Activated B cell treated with CpG ODN at 0.5 μM for 24 hours (primary cell): ENCODE measurements at regions of chr1 and their contacts with region 1.

Region 1: DNA sequence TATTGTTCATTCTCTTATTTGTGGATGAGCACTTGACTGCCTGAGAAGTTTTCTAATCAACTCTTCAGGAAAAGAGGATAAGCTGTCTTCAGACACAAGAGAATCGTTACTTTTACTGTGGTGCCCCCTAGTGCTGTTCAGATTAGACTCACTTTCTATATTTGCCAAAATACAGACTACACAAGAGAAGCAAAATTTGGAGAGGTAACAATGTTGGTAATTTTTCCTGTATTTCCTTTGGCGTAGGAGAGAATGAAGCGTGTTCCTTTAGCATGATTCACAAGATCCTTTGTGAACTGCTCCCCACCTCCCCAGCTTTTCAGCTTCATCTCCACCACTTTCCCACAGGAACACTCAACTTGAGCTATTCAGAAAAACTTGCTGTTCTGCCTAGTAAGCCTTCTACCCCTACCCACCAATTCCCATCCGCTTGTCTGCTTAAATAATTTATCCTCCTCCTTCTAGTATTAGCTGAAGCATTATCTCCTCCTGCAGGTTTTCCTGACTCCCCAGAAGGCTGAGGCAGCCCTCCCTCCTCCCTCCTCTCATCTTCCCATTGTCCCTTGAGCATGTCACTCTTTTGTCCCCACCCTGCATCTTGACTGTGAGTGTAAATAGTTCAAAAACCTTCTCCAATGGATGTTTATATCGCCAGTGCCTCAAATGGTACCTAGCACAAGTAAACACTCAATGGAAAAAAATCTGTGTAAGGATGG is 4.5 kb downstream of the TNFSF4 start:
- DNase-seq: no peak
- ATAC-seq: no peak
- H3K4me3 Mint-ChIP-seq: no peak overlapping the region
- H3K27ac Mint-ChIP-seq: no peak overlapping the region
- H3K4me1 Mint-ChIP-seq: peaks cover 50% of the 10 kb centered on the region
- H3K27me3 Mint-ChIP-seq: no peaks in the 10 kb centered on the region
- CTCF ChIP-seq: no peak

Region 2: GRCh38 chr1:172778456-172779455 is 423.8 kb before region 1 on chr1:
- CTCF ChIA-PET with region 1: interaction called, 53 read pairs
- POLR2A ChIA-PET with region 1: interaction called, 5 read pairs
- intact Hi-C with region 1: loop called (anchors 1 kb)
- DNase-seq: no peak
- ATAC-seq: peak; percentile 82
- H3K4me3 Mint-ChIP-seq: no peak overlapping the region
- H3K27ac Mint-ChIP-seq: no peak overlapping the region
- H3K4me1 Mint-ChIP-seq: peaks cover 29% of the 10 kb centered on the region
- H3K27me3 Mint-ChIP-seq: no peaks in the 10 kb centered on the region
- CTCF ChIP-seq: no peak

Region 3: DNA sequence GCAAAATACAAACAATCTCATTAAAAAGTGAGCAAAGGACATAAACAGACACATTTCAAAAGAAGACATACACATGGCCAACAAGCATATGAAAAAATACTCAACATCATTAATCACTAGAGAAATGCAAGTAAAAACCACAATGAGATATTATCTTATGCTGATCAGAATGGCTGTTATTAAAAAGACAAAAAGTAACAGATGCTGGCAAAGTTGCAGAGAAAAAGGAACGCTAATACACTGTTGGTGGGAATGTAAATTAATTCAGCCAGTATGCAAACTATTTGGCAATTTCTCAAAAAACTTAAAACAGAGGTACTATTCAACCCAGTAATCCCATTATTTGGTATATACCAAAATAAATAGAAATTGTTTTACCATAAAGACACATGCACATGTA is 119.7 kb before region 1 on chr1:
- CTCF ChIA-PET with region 1: no interaction called
- POLR2A ChIA-PET with region 1: no interaction called
- intact Hi-C with region 1: no loop called
- DNase-seq: no peak
- ATAC-seq: no peak
- H3K4me3 Mint-ChIP-seq: no peak overlapping the region
- H3K27ac Mint-ChIP-seq: no peak overlapping the region
- H3K4me1 Mint-ChIP-seq: no peaks in the 10 kb centered on the region
- H3K27me3 Mint-ChIP-seq: peaks cover 3% of the 10 kb centered on the region
- CTCF ChIP-seq: no peak

Region 4: GRCh38 chr1:174786760-174787159 is 1584.2 kb after region 1 on chr1:
- CTCF ChIA-PET with region 1: no interaction called
- POLR2A ChIA-PET with region 1: no interaction called
- intact Hi-C with region 1: no loop called
- DNase-seq: no peak
- ATAC-seq: no peak
- H3K4me3 Mint-ChIP-seq: no peak overlapping the region
- H3K27ac Mint-ChIP-seq: no peak overlapping the region
- H3K4me1 Mint-ChIP-seq: peaks cover 11% of the 10 kb centered on the region
- H3K27me3 Mint-ChIP-seq: no peaks in the 10 kb centered on the region
- CTCF ChIP-seq: no peak